Activated CD4-positive, alpha-beta memory T cell treated with anti-CD3 and anti-CD28 coated beads for 36 hours (primary cell): ENCODE measurements at regions of chrX and their contacts with region 1.

Region 1: DNA sequence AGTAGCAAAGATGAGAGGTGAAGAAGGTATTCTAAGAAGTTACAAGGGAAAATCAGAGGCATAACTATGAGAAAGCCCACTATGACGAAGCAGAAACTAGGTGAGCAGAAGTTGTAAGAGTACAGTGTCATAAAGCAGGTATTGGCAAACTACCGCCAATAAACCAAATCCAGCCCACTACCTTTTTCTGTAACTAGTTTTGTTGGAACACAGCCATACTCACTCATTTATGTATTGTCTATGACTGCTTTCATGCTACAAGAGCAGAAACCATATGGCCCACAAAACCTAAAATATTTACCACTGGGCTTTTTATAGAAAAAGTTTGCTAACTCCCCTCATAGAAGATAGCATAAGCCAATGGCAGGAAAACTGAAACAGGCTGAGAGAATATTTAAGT is 31.8 kb upstream of the ZCCHC13 start:
- DNase-seq: no peak
- H3K4me3 Mint-ChIP-seq: no peak overlapping the region
- H3K27ac Mint-ChIP-seq: no peak overlapping the region
- H3K4me1 Mint-ChIP-seq: peaks cover 17% of the 10 kb centered on the region
- H3K27me3 Mint-ChIP-seq: no peaks in the 10 kb centered on the region

Region 2: GRCh38 chrX:74119016-74119910 is 153.0 kb before region 1 on chrX:
- CTCF ChIA-PET with region 1: no interaction called
- POLR2A ChIA-PET with region 1: no interaction called
- intact Hi-C with region 1: no loop called
- DNase-seq: no peak
- H3K4me3 Mint-ChIP-seq: no peak overlapping the region
- H3K27ac Mint-ChIP-seq: no peak overlapping the region
- H3K4me1 Mint-ChIP-seq: no peaks in the 10 kb centered on the region
- H3K27me3 Mint-ChIP-seq: no peaks in the 10 kb centered on the region

Region 3: GRCh38 chrX:74218895-74219294 is 53.3 kb before region 1 on chrX:
- CTCF ChIA-PET with region 1: no interaction called
- POLR2A ChIA-PET with region 1: interaction called, 4 read pairs
- intact Hi-C with region 1: loop called (anchors 1 kb)
- DNase-seq: no peak
- H3K4me3 Mint-ChIP-seq: no peak overlapping the region
- H3K27ac Mint-ChIP-seq: no peak overlapping the region
- H3K4me1 Mint-ChIP-seq: peaks cover 32% of the 10 kb centered on the region
- H3K27me3 Mint-ChIP-seq: no peaks in the 10 kb centered on the region